Ascending aorta (tissue), 2 donors: ENCODE measurements at regions of chr14 and their contacts with region 1.

Region 1: DNA sequence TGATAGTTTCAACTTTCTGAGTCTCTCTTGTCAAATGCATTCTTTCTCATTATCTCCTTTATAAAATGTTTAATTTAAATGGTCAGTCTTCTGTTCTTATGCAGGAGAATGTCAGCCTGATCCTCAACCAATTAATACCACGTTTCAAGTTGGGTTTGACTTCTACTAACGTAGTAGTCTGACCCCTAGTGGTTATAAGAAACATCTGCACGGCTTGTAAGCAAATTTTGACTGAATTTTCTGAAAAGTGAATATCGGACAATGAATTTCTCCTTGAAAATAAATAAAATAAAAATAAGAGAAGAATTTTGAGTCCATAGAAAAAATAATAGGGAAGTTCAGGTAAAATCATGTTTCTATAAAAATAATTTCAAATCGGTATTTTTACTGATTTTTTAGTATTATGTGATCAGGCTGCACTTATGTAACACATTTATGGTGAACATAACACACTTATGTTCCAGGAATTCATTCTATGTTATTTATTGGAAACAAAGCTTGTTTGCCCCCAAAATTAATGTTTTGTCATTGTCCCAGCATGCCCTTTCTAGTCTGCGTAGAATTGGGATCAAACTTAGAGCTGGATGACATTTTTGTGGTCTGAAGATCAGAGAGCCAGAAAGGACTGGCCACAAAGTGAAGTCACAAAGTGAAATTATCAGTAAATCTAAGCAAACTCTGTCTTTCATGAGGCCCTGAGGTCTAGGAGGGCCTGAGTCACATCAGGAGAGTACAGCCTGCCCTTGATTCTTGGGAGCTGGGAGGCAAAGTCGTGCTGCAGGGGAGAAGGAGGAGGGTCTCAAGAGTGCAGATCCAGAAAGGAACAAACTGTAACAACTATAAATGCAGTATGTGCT is 101.2 kb upstream of the STXBP6 start:
- DNase-seq: no peak
- H3K4me3 ChIP-seq: no peak overlapping the region
- H3K27ac ChIP-seq: no peak overlapping the region
- H3K4me1 ChIP-seq: no peaks in the 10 kb centered on the region
- H3K27me3 ChIP-seq: no peaks in the 10 kb centered on the region
- CTCF ChIP-seq: peak; percentile 31 to 73 (median 60)

Region 2: DNA sequence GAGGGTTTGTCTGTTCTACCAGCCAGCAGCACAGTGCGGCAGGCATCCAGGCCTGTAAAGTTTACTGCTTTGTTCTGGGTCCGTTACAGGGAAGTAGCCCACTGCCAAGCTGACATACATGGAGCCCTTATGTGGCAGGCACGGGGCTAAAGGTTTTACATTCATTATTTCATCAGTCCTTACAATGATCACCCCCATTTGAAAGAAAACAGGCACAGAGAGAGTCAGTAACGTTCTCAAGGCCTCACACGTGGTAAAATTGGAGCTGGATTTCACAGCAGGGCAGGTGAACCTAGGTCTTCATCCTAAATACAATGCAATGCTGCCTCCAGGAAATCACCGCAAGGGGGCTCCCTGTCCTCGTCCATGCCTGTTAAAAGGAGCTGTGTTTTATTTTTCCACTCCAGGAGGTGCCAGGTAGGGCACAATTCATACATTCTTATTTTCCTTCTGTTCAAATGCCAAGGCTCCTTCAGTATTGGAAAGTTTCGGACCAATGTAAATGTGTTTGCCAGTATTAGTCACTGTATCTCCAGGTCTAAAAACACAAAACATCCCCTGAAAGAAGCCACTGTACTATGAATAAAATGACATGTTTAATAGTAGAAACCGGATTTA is 345.0 kb before region 1 on chr14:
- intact Hi-C with region 1: loop called (anchors 5 kb)
- DNase-seq: peak in 1 of 2 donors; percentile 67
- H3K4me3 ChIP-seq: no peak overlapping the region
- H3K27ac ChIP-seq: no peak overlapping the region
- H3K4me1 ChIP-seq: no peaks in the 10 kb centered on the region
- H3K27me3 ChIP-seq: no peaks in the 10 kb centered on the region
- CTCF ChIP-seq: peak; percentile 17 to 64 (median 50)

Region 3: GRCh38 chr14:24900269-24901100 is 250.7 kb before region 1 on chr14:
- intact Hi-C with region 1: no loop called
- DNase-seq: no peak
- H3K4me3 ChIP-seq: no peak overlapping the region
- H3K27ac ChIP-seq: no peak overlapping the region
- H3K4me1 ChIP-seq: no peaks in the 10 kb centered on the region
- H3K27me3 ChIP-seq: no peaks in the 10 kb centered on the region
- CTCF ChIP-seq: no peak